ENCODE measurements at regions of chr6 and their contacts with region 1.

Region 1: GRCh38 chr6:99822741-99823512 is 171.1 kb downstream of the MCHR2 start:
- DNase-seq: peak; percentile 59 to 72
- H3K4me3 ChIP-seq: peak overlapping the region; percentile 45
- H3K4me1 ChIP-seq: peaks cover 5% of the 10 kb centered on the region
- H3K27me3 ChIP-seq: no peaks in the 10 kb centered on the region; the same call in 1 of the 2 replicates

Region 2: DNA sequence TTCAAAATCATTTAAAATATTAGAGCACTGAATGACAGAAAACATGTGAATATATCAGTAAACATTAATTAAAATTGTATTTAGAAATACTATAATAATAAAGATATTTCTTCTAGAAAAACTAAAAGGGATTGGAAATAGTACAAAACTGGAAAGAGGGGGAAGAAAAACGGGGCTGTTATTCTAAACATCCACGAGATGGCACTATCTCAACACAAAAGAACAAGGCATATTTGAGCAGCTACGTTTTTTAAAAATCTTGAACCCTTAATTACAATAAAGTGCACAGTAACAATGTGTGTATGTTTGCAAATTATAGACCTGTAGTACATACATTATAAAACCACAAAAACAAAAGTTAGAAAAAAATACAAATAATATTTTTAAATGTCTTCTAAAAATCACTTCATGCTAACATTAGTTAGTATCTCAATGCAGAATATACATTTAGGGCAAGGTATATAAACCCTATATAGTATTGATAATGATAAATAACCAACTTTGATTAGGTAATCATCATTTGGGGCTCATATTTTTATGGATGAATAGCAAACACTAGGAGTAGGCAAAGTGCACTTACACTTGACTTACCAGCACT is 355.3 kb before region 1 on chr6:
- in situ Hi-C with region 1: loop called (anchors 25 kb)
- DNase-seq: peak in 1 of 2 experiments; percentile 59
- H3K4me3 ChIP-seq: no peak overlapping the region
- H3K4me1 ChIP-seq: peaks cover 8% of the 10 kb centered on the region
- H3K27me3 ChIP-seq: no peaks in the 10 kb centered on the region

Region 3: DNA sequence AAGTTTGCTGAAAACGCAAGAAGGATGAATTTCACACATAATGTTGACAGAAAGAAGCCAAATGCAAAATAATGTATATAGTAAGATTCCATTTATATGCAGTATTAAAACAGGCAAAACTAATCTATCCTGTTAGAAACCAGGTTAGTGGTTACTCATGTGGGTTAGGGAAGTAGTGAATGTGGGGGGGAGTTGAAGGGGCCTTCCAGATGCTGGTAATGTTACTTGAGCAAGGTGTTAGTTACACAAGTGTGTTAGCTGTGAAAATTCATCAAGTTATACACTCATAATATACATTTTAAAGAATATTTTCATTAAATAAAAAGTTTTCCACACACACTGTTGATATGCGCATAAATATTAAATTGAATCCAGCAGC is 337.5 kb before region 1 on chr6:
- in situ Hi-C with region 1: no loop called
- DNase-seq: no peak
- H3K4me3 ChIP-seq: no peak overlapping the region
- H3K4me1 ChIP-seq: no peaks in the 10 kb centered on the region
- H3K27me3 ChIP-seq: no peaks in the 10 kb centered on the region

Region 4: GRCh38 chr6:99588618-99589289 is 234.2 kb before region 1 on chr6:
- in situ Hi-C with region 1: loop called (anchors 25 kb)
- DNase-seq: peak; percentile 79 to 86
- H3K4me3 ChIP-seq: peak overlapping the region; percentile 34
- H3K4me1 ChIP-seq: peaks cover 8% of the 10 kb centered on the region
- H3K27me3 ChIP-seq: peaks cover 11% of the 10 kb centered on the region

Measured in HAP-1 (cell line).